Calu3 (cell line): ENCODE measurements at regions of chr11 and their contacts with region 1.

Region 1: GRCh38 chr11:34599406-34599901 is 21.4 kb upstream of the EHF start:
- DNase-seq: peak; percentile 52
- H3K4me3 Mint-ChIP-seq: peak overlapping the region; percentile 51
- H3K27ac Mint-ChIP-seq: peak overlapping the region; percentile 81
- H3K4me1 Mint-ChIP-seq: peaks cover 77% of the 10 kb centered on the region
- H3K27me3 Mint-ChIP-seq: no peaks in the 10 kb centered on the region
- CTCF ChIP-seq: no peak

Region 2: DNA sequence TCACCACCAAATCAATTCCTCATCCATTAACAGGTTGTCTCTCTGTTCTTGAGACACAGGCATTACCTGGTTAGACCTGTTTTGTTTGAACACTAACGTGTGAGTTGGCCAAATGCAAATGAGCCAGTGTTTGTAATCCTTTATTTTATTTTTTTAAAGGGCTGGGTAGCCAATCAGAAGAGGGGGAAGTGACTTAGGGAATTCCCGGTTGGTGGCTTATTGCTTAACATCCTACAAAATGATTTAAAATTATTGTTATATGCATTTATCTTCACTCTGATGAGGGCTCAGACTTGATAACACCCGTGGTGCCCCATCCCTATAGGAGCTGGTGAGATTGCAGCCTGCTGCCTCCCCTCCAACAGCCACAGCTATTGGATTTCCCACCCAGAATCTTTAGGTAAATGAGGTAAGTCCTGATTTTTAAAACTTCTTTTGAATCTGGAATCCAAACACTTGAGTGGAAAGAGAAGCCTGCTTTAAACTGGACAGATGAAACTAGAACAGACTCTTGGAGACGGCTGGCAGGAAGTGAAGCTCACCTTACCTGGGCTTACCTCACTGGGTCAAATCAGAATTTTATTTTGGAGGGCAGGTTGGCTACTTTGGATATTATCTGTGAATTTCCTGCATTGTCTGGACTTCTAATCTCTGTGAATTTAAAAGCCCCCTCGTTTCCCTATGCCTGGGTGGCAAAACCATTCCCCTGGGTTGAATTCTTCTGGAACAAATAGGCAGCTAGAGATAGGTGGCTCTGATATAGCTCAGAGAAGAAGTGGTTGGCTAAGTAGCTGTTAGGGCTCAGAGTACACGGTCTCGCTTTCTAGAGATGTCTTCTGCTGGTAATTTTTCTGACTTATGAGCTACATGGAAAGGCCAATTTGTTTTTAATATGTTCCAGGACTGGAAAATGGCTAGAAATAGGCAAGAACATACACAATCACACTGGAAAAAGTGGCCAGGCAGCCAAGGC is 21.7 kb after region 1 on chr11 and contains the start of gene EHF:
- CTCF ChIA-PET with region 1: interaction called, 11 read pairs
- intact Hi-C with region 1: loop called (anchors 2 kb)
- DNase-seq: peak; percentile 73
- H3K4me3 Mint-ChIP-seq: peak within 1 kb of the TSS; percentile 91
- H3K27ac Mint-ChIP-seq: peak within 1 kb of the TSS; percentile 96
- H3K4me1 Mint-ChIP-seq: peaks cover 44% of the 10 kb centered on the region
- H3K27me3 Mint-ChIP-seq: no peaks in the 10 kb centered on the region
- CTCF ChIP-seq: no peak
- total RNA-seq, gene EHF: 286 and 299 TPM in 2 replicates

Region 3: GRCh38 chr11:34640050-34640923 is 40.8 kb after region 1 on chr11:
- CTCF ChIA-PET with region 1: interaction called, 3 read pairs
- intact Hi-C with region 1: loop called (anchors 5 kb)
- DNase-seq: peak; percentile 88
- H3K4me3 Mint-ChIP-seq: peak overlapping the region; percentile 68
- H3K27ac Mint-ChIP-seq: peak overlapping the region; percentile 62
- H3K4me1 Mint-ChIP-seq: peaks cover 92% of the 10 kb centered on the region
- H3K27me3 Mint-ChIP-seq: no peaks in the 10 kb centered on the region
- CTCF ChIP-seq: no peak

Region 4: GRCh38 chr11:34825670-34826383 is 226.4 kb after region 1 on chr11:
- CTCF ChIA-PET with region 1: no interaction called
- intact Hi-C with region 1: loop called (anchors 5 kb)
- DNase-seq: peak; percentile 90
- H3K4me3 Mint-ChIP-seq: peak overlapping the region; percentile 47
- H3K27ac Mint-ChIP-seq: peak overlapping the region; percentile 96
- H3K4me1 Mint-ChIP-seq: peaks cover 68% of the 10 kb centered on the region
- H3K27me3 Mint-ChIP-seq: no peaks in the 10 kb centered on the region
- CTCF ChIP-seq: no peak